ENCODE measurements at regions of chr12 and their contacts with region 1.

Region 1: DNA sequence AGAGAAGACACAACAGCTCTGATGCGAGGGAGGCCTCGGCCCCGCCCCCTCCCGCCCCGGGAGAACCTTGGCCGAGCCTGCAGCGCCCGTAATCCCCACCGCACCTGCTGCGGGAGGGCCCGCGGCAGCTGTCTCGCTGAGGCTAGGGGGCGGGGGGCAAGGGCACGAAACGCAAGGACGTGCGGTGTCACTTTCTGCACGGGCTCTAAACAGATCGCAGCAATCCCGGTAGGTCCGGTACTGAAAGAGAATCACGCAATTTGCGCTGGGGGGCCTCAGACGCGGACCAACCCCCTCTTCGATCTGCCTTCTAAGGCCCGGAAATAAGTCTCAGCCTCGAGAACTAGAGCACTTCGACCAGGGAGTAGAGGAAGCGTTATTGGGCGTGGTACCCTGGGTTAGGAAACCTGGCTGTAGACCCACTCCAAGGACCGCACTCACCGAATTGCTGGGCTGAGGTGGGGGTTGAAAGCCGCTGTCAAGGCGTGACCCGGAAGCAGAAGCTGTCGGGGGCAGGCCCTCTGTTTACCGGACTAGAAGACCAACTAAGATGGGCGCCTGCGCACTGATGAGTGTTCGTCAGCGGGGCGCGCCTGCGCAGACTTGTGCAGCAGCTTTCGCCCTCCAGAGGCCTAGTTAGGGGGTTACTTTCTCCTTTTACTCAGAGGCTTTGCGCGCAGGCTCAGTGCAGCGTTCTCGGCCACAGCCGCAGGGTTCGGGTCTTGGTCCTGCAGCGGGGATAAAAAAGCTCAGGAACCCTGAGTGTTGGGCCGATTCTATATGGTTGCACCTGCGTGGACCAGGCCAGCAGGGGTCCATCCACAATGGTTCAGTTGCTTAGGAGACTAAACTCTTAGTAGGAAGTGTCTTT is at the start of gene ASB8:
- DNase-seq: peak; percentile 92 to 99
- ATAC-seq: peak; percentile 95 to 97
- H3K4me3 ChIP-seq: peak within 1 kb of the TSS; percentile 82
- H3K27ac ChIP-seq: peak within 1 kb of the TSS; percentile 78 to 87
- H3K4me1 ChIP-seq: peaks cover 8% of the 10 kb centered on the region; the same call in 1 of the 3 replicates
- CTCF ChIP-seq: no peak; the same call in 2 of the 3 replicates
- EP300 ChIP-seq: no peak
- POLR2A ChIP-seq: peak; percentile 36; the same call in 1 of the 2 replicates
- RAD21 ChIP-seq: no peak; a peak in 1 of 5 replicates
- polyA plus RNA-seq, gene ASB8: 25.6 and 33.1 TPM in 2 replicates

Region 2: DNA sequence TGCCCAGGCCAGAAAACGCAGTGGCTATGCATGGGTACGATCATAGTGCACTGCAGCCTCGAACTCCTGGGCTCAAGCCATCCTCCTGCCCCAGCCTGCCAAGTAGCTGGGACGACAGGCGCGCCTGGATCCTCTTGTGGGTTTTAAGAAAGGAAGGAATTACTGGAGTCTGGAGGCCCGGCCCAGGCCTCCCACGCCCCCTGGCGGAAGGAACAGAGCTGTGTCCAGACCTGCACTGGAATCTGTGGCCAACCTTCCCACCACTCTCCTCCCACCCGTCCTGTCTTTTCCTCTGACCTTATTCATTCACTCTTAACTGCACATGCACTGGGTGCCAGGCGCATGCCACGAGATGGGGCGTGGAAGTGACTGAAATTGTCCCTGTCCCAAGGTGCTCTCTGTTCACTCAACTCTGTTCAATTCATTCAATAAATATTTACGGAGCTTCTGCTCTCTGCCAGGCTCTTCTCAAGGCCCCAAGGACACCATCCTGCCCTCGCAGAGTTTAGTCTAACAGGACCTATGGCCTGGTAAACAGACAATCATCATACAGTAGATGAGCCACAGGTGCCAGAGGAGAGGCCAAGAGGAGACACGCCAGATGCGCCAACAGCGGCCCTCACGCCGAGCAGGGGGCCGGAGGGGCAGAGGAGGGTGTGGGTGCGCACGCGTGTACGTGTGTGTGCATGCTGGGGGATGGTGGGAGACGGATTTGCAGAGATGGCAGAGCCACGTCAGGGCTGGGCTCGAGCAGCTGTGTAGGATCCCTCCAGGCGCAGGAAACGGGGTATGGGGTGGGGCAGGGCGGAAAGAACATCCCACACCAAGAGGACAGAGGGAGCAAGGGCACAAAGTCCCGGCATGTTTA is 207.6 kb before region 1 on chr12:
- CTCF ChIA-PET with region 1: no interaction called
- POLR2A ChIA-PET with region 1: no interaction called
- DNase-seq: peak; percentile 88 to 90
- ATAC-seq: peak; percentile 88 to 98
- H3K4me3 ChIP-seq: no peak overlapping the region
- H3K27ac ChIP-seq: peak overlapping the region in 1 of 2 experiments; percentile 36; a peak in 2 of 6 replicates
- H3K4me1 ChIP-seq: peaks cover 19% of the 10 kb centered on the region
- CTCF ChIP-seq: peak; percentile 86
- EP300 ChIP-seq: no peak
- POLR2A ChIP-seq: no peak
- RAD21 ChIP-seq: peak; percentile 79 to 84

Region 3: DNA sequence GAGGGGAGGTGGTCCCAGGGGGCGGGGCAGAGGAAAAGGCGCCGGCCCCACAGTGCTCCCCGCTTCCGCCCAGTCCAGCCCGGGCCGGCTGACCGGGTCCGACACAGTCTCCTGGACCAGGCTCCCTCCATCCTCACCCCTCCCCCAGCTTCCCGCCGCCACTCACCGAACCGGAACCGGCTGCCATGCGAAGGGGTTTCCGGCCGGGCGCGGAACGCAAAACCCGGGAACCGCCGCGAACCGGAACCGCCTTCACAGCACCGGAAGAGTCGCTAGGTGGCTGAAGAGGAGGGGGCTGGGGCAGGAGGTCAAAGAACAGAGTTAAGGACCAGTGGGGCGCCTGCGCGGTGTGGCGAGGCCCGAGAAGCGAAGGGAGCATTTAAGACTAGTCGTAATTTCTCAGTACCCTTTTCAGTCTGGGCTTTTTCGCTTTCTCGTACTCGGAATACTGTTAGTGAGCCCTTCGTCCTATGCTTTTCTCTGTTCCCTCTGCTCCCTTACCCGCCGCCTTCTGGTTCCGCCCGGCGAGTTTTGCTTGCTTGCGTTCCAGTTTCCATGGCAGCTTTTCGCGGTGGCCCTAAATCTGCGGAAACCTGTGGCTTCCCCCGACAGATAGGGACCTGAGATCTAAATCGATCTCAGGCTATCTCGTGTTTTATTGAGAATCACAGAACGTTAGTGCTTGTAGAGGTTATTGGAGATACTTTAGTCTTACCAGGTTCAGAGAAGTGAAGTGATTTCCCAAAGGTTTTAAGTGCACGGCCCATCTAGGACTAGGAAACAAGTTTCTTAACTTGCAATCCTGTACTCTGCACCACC is 51.2 kb before region 1 on chr12 and contains the start of gene SENP1:
- CTCF ChIA-PET with region 1: interaction called, 3 read pairs
- POLR2A ChIA-PET with region 1: interaction called, 24 read pairs
- DNase-seq: peak; percentile 86 to 94
- ATAC-seq: peak; percentile 95 to 98
- H3K4me3 ChIP-seq: peak within 1 kb of the TSS; percentile 93
- H3K27ac ChIP-seq: peak within 1 kb of the TSS; percentile 97 to 99
- H3K4me1 ChIP-seq: peaks cover 13% of the 10 kb centered on the region
- CTCF ChIP-seq: no peak
- EP300 ChIP-seq: no peak
- POLR2A ChIP-seq: peak; percentile 48; the same call in 1 of the 2 replicates
- RAD21 ChIP-seq: no peak
- polyA plus RNA-seq, gene SENP1: 49.2 and 49.3 TPM in 2 replicates

Region 4: GRCh38 chr12:48119078-48119833 is 38.0 kb before region 1 on chr12 and contains the start of gene PFKM:
- CTCF ChIA-PET with region 1: interaction called, 3 read pairs
- POLR2A ChIA-PET with region 1: interaction called, 16 read pairs
- DNase-seq: peak; percentile 92 to 93
- ATAC-seq: peak; percentile 99 to 100
- H3K4me3 ChIP-seq: peak within 1 kb of the TSS; percentile 74
- H3K27ac ChIP-seq: peak within 1 kb of the TSS; percentile 74 to 88
- H3K4me1 ChIP-seq: peaks cover 16% of the 10 kb centered on the region
- CTCF ChIP-seq: no peak
- EP300 ChIP-seq: no peak
- POLR2A ChIP-seq: peak; percentile 47
- RAD21 ChIP-seq: no peak
- polyA plus RNA-seq, gene PFKM: 43.0 and 45.5 TPM in 2 replicates

Region 5: GRCh38 chr12:48142818-48143674 is 14.2 kb before region 1 on chr12:
- CTCF ChIA-PET with region 1: interaction called, 11 read pairs
- POLR2A ChIA-PET with region 1: interaction called, 3 read pairs
- DNase-seq: no peak
- ATAC-seq: no peak
- H3K4me3 ChIP-seq: no peak overlapping the region
- H3K27ac ChIP-seq: no peak overlapping the region
- H3K4me1 ChIP-seq: no peaks in the 10 kb centered on the region
- CTCF ChIP-seq: no peak
- EP300 ChIP-seq: no peak
- POLR2A ChIP-seq: no peak
- RAD21 ChIP-seq: no peak

Region 6: GRCh38 chr12:48197971-48198671 is 40.9 kb after region 1 on chr12:
- CTCF ChIA-PET with region 1: no interaction called
- POLR2A ChIA-PET with region 1: interaction called, 10 read pairs
- DNase-seq: peak; percentile 93 to 98
- ATAC-seq: peak; percentile 93 to 96
- H3K4me3 ChIP-seq: peak overlapping the region; percentile 66
- H3K27ac ChIP-seq: peak overlapping the region; percentile 86 to 93
- H3K4me1 ChIP-seq: peaks cover 50% of the 10 kb centered on the region
- CTCF ChIP-seq: no peak
- EP300 ChIP-seq: no peak
- POLR2A ChIP-seq: peak; percentile 77
- RAD21 ChIP-seq: no peak